Activated naive CD4-positive, alpha-beta T cell treated with anti-CD3 and anti-CD28 coated beads for 36 hours (primary cell): ENCODE measurements at regions of chr10 and their contacts with region 1.

Region 1: GRCh38 chr10:101353692-101354327 is at the start of gene BTRC:
- DNase-seq: peak; percentile 98
- H3K4me3 Mint-ChIP-seq: peak within 1 kb of the TSS; percentile 92
- H3K27ac Mint-ChIP-seq: peak within 1 kb of the TSS; percentile 95
- H3K4me1 Mint-ChIP-seq: peaks cover 30% of the 10 kb centered on the region
- H3K27me3 Mint-ChIP-seq: peaks cover 2% of the 10 kb centered on the region
- total RNA-seq, gene BTRC: 10.9 to 12.7 TPM

Region 2: DNA sequence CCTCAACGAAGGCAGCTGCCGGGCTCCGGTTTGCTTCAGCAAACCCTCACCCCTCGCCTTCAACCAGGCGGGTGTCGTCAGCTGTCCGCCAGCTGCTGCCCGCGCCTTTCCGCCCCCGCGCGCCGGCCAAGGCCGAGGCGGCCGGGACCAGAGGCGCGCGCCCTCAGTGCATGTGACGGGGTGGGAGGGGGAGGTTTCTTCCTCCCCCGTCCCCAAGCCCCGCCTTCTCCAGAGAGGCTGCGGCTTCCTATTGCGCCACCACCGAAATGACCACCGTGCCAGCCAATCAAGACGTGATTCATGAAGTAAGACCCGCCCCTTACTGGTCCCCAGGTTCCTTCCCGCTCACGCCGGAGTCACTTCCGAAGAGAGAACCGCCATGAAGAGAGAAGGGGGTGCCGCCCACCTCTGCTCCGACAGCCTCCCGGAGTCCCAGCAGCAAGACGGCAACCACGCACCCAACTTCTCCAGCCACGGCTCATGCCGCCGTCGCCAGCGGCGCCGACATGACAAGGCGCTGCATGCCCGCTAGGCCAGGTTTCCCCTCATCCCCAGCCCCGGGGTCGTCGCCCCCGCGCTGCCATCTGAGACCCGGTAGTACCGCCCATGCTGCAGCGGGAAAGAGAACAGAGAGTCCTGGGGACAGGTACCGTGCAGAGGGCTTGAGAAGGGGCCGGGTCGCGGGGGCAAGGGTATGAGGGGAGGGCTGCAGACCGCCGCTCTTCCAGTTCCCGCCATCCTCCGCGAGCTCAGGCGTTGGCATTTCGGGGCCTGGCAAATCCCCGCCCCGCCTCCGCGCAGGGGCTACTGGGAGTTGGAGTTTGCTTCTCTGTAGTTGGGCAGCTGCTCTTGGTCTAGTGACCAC is 441.0 kb before region 1 on chr10 and contains the start of gene SLF2:
- CTCF ChIA-PET with region 1: no interaction called
- intact Hi-C with region 1: loop called (anchors 1 kb)
- DNase-seq: peak; percentile 98
- H3K4me3 Mint-ChIP-seq: peak within 1 kb of the TSS; percentile 98
- H3K27ac Mint-ChIP-seq: peak within 1 kb of the TSS; percentile 99
- H3K4me1 Mint-ChIP-seq: peaks cover 42% of the 10 kb centered on the region
- H3K27me3 Mint-ChIP-seq: no peaks in the 10 kb centered on the region
- total RNA-seq, gene SLF2: 29.3 to 30.3 TPM

Region 3: GRCh38 chr10:101130984-101131961 is 222.5 kb before region 1 on chr10 and contains the start of gene TLX1:
- CTCF ChIA-PET with region 1: no interaction called
- intact Hi-C with region 1: no loop called
- DNase-seq: no peak
- H3K4me3 Mint-ChIP-seq: no peak within 1 kb of the TSS
- H3K27ac Mint-ChIP-seq: no peak within 1 kb of the TSS
- H3K4me1 Mint-ChIP-seq: peaks cover 35% of the 10 kb centered on the region
- H3K27me3 Mint-ChIP-seq: peaks cover 83% of the 10 kb centered on the region
- total RNA-seq, gene TLX1: not detected

Region 4: GRCh38 chr10:101297901-101298486 is 55.8 kb before region 1 on chr10:
- CTCF ChIA-PET with region 1: no interaction called
- intact Hi-C with region 1: no loop called
- DNase-seq: peak; percentile 89
- H3K4me3 Mint-ChIP-seq: no peak overlapping the region
- H3K27ac Mint-ChIP-seq: no peak overlapping the region
- H3K4me1 Mint-ChIP-seq: peaks cover 1% of the 10 kb centered on the region
- H3K27me3 Mint-ChIP-seq: peaks cover 35% of the 10 kb centered on the region

Region 5: DNA sequence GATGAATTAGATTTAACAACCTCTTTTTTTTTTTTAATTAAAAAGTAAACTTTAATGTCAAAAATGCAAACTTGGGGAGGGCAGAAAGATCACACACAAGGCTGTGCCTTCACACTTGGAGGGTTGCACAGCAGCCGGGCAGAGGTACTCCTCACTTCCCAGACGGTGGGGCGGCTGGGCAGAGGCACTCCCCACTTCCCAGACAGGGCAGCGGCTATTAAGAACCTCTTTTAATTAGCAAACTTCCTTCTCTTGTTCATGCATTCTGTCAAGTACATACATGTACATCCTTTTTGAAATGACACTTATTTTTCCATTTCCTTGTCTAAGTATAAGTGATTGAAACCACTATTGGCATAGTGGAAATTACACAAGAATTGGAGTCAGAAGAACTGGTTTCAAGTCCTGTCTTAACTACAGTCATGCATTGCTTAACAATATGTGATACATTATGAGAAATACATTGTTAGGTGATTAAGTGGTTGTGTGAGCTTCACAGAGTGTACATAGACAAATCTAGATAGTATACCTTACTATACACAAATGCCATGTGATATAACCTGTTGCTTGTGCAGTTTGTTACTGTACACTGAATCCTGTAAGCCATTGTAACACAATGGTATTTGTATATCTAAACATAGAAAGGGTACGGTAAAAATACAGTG is 26.7 kb after region 1 on chr10:
- CTCF ChIA-PET with region 1: no interaction called
- intact Hi-C with region 1: loop called (anchors 2 kb)
- DNase-seq: no peak
- H3K4me3 Mint-ChIP-seq: no peak overlapping the region
- H3K27ac Mint-ChIP-seq: no peak overlapping the region
- H3K4me1 Mint-ChIP-seq: peaks cover 32% of the 10 kb centered on the region
- H3K27me3 Mint-ChIP-seq: no peaks in the 10 kb centered on the region

Region 6: GRCh38 chr10:101545898-101546297 is 192.1 kb after region 1 on chr10:
- CTCF ChIA-PET with region 1: no interaction called
- intact Hi-C with region 1: no loop called
- DNase-seq: no peak
- H3K4me3 Mint-ChIP-seq: no peak overlapping the region
- H3K27ac Mint-ChIP-seq: no peak overlapping the region
- H3K4me1 Mint-ChIP-seq: no peaks in the 10 kb centered on the region
- H3K27me3 Mint-ChIP-seq: no peaks in the 10 kb centered on the region

Region 7: DNA sequence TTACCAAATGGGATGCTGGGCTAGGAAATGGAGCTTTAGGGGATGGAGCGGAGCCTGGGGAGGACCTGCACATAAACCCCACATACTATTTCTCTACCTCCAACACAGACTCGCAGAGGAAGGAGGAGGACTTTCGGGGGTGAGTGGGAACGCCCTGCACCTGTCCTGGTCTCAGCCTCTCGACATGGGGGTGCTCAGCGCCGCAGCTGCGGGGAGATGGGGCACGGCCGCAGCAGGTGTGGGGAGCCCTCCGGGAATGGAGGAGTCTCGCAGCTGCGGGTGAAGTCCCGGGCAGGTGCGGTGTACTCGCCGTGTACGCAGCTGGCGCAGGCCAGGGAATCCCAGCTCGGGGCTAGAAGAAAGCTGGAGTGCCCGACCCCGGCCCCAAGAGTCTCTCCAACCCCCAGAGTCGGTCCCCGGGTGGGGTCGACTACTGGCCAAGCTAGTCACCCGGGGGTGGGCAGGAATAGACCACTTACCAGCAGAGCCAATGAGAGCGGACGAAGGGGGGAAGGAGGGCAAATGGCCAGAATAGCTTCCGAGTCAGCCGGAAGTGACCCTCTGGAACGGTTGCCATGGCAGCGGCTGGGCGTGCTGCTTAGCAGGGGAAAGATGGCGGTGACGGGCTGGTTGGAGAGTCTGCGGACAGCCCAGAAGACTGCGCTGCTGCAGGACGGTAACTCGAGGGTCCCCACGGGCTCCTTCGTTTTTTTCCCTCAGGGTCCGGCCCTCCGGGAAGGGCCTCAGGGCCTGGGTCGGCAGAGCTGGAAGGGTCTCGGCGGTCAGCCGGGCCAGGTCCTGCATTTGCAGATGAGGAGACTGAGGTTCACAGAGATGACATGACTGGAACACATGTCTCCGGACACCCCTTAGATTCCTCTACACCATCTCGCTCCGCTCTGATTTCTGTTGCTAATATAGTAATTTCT is 234.2 kb after region 1 on chr10 and contains the starts of genes DPCD and POLL:
- CTCF ChIA-PET with region 1: no interaction called
- intact Hi-C with region 1: loop called (anchors 1 kb)
- DNase-seq: peak; percentile 97
- H3K4me3 Mint-ChIP-seq: peak within 1 kb of the TSS; percentile 91
- H3K27ac Mint-ChIP-seq: peak within 1 kb of the TSS; percentile 78
- H3K4me1 Mint-ChIP-seq: peaks cover 21% of the 10 kb centered on the region
- H3K27me3 Mint-ChIP-seq: no peaks in the 10 kb centered on the region
- total RNA-seq, gene DPCD: 13.8 to 14.1 TPM
- total RNA-seq, gene POLL: 28.1 to 29.0 TPM

Region 8: GRCh38 chr10:102132563-102133372 is 779.0 kb after region 1 on chr10 and contains the start of gene PPRC1:
- CTCF ChIA-PET with region 1: no interaction called
- intact Hi-C with region 1: loop called (anchors 5 kb)
- DNase-seq: peak; percentile 99
- H3K4me3 Mint-ChIP-seq: peak within 1 kb of the TSS; percentile 97
- H3K27ac Mint-ChIP-seq: peak within 1 kb of the TSS; percentile 96
- H3K4me1 Mint-ChIP-seq: peaks cover 42% of the 10 kb centered on the region
- H3K27me3 Mint-ChIP-seq: no peaks in the 10 kb centered on the region
- total RNA-seq, gene PPRC1: 54.6 to 55.0 TPM